ENCODE measurements at regions of chr9 and their contacts with region 1.

Region 1: GRCh38 chr9:111896353-111896958 is at the start of gene UGCG:
- DNase-seq: peak; percentile 84 to 91
- ATAC-seq: peak; percentile 85
- total RNA-seq, gene UGCG: 32.3 to 49.2 TPM

Region 2: GRCh38 chr9:111759762-111760639 is 136.5 kb before region 1 on chr9:
- intact Hi-C with region 1: loop called in 1 of 2 experiments (anchors 10 kb)
- DNase-seq: peak; percentile 23 to 28
- ATAC-seq: peak; percentile 98

Region 3: GRCh38 chr9:112074250-112075008 is 178.0 kb after region 1 on chr9:
- intact Hi-C with region 1: loop called in 1 of 2 experiments (anchors 5 kb)
- DNase-seq: peak; percentile 58 to 80
- ATAC-seq: peak; percentile 83